ENCODE measurements at regions of chr3 and their contacts with region 1.

Region 1: GRCh38 chr3:23811919-23812318 is 6.2 kb downstream of the UBE2E1 start:
- DNase-seq: no peak
- H3K4me3 Mint-ChIP-seq: peak overlapping the region; percentile 92
- H3K27ac Mint-ChIP-seq: peak overlapping the region; percentile 25
- H3K4me1 Mint-ChIP-seq: peaks cover 65% of the 10 kb centered on the region
- H3K27me3 Mint-ChIP-seq: no peaks in the 10 kb centered on the region

Region 2: GRCh38 chr3:23740517-23740965 is 71.4 kb before region 1 on chr3:
- CTCF ChIA-PET with region 1: no interaction called
- POLR2A ChIA-PET with region 1: no interaction called
- intact Hi-C with region 1: loop called (anchors 2 kb)
- DNase-seq: peak; percentile 74
- H3K4me3 Mint-ChIP-seq: no peak overlapping the region
- H3K27ac Mint-ChIP-seq: no peak overlapping the region
- H3K4me1 Mint-ChIP-seq: peaks cover 8% of the 10 kb centered on the region
- H3K27me3 Mint-ChIP-seq: peaks cover 14% of the 10 kb centered on the region

Region 3: GRCh38 chr3:23797491-23797890 is 14.4 kb before region 1 on chr3:
- CTCF ChIA-PET with region 1: no interaction called
- POLR2A ChIA-PET with region 1: interaction called, 3 read pairs
- intact Hi-C with region 1: loop called (anchors 1 kb)
- DNase-seq: peak; percentile 22
- H3K4me3 Mint-ChIP-seq: no peak overlapping the region
- H3K27ac Mint-ChIP-seq: peak overlapping the region; percentile 6
- H3K4me1 Mint-ChIP-seq: peaks cover 15% of the 10 kb centered on the region
- H3K27me3 Mint-ChIP-seq: peaks cover 9% of the 10 kb centered on the region

Region 4: DNA sequence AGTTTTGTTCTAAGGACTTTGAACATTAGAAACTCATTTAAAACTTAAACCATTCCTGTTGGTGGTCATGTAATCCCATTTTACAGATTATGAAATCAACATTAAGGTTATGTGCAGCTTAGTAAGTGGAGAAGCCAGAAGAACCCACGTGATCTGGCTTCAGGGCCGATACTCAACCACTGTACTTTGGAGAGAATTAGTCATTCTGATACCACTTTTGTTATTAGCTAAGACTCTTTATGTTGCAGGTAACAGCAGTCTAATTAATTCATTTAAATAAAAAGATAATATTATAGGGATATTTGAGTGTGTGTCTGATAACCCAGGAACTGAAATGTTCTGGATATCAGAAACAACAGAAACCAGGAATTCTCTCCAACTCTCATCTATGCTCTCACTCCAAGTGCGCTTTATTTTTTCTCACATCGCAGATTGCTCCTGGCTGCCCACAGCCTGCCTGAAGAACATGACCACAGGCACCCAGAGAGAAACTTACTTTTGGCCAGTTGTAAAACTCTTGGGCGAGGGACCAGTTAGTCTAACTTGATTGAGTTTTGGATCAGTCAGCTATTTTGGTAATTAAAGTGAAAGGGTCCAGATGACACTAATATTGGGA is 19.1 kb after region 1 on chr3:
- CTCF ChIA-PET with region 1: no interaction called
- POLR2A ChIA-PET with region 1: interaction called, 3 read pairs
- intact Hi-C with region 1: loop called (anchors 2 kb)
- DNase-seq: no peak
- H3K4me3 Mint-ChIP-seq: no peak overlapping the region
- H3K27ac Mint-ChIP-seq: peak overlapping the region; percentile 10
- H3K4me1 Mint-ChIP-seq: peaks cover 44% of the 10 kb centered on the region
- H3K27me3 Mint-ChIP-seq: no peaks in the 10 kb centered on the region

Region 5: GRCh38 chr3:23926736-23927135 is 114.8 kb after region 1 on chr3:
- CTCF ChIA-PET with region 1: no interaction called
- POLR2A ChIA-PET with region 1: no interaction called
- intact Hi-C with region 1: no loop called
- DNase-seq: no peak
- H3K4me3 Mint-ChIP-seq: no peak overlapping the region
- H3K27ac Mint-ChIP-seq: no peak overlapping the region
- H3K4me1 Mint-ChIP-seq: no peaks in the 10 kb centered on the region
- H3K27me3 Mint-ChIP-seq: no peaks in the 10 kb centered on the region

Region 6: DNA sequence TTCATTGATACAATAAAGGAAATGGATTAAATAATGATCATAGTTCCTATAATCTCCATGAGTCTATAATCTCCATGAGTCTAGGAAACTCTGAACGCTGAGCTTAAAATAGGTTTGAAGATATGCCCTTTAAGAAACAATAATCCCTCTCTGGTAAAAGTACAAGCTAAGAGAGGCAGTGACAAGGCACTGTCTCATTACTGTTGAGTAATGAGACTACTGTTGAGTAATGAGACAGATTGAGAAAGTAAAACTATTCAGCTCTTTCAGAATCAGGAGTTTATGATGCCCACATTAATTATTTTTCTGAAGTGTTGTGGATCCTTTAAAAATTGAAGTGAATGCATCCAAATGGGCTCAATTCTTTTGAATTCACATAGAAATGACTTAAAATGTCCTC is 918.3 kb after region 1 on chr3:
- CTCF ChIA-PET with region 1: no interaction called
- POLR2A ChIA-PET with region 1: no interaction called
- intact Hi-C with region 1: no loop called
- DNase-seq: no peak
- H3K4me3 Mint-ChIP-seq: no peak overlapping the region
- H3K27ac Mint-ChIP-seq: no peak overlapping the region
- H3K4me1 Mint-ChIP-seq: no peaks in the 10 kb centered on the region
- H3K27me3 Mint-ChIP-seq: no peaks in the 10 kb centered on the region